Naive thymus-derived CD4-positive, alpha-beta T cell (primary cell): ENCODE measurements at regions of chr22 and their contacts with region 1.

Region 1: DNA sequence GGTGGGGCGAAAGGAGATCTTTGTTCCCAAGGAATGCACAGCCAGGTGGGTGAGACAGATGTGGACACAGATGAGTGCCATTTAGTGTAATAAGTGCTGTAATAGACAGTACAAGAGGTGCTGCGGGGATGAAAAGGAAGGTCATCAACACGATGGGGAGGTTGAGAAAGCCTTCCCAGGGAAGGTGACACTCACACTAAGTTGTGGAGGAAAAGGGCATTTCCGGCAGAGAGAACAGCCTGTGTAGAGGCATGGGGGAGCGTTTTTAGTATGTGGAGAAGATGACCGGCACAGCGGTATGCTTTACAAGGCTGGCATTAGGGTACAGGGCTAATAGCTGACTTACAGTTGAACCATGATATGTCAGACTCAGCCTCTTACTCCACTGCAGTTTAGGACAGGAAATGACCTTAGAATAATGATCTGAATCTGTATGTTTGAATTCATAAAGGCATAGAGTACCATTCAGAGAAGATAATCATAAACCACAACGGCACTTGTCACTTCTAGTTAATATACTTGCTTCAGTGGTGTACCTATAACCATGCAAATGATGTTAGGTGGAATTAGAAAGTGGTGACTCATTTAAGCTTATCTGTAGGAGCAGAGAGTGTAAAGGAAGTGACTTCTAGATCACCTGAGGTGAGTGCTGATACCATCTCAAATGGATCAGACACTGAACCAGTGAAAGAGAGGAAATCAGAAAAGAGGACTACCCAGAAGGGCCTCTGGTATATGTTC is 60.6 kb downstream of the FAM83F start:
- DNase-seq: peak in 7 of 9 donors; percentile 15 to 70 (median 39)
- ATAC-seq: peak; percentile 95
- H3K4me3 ChIP-seq: peak overlapping the region; percentile 21
- H3K4me3 Mint-ChIP-seq: peak overlapping the region; percentile 60 to 80 (median 70)
- H3K27ac ChIP-seq: peak overlapping the region; percentile 65
- H3K27ac Mint-ChIP-seq: peak overlapping the region; percentile 50 to 91 (median 84)
- H3K4me1 ChIP-seq: peaks cover 53 to 69% of the 10 kb centered on the region in 2 donors
- H3K4me1 Mint-ChIP-seq: peaks cover 63 to 95% (median 83%) of the 10 kb centered on the region in 7 donors
- H3K27me3 ChIP-seq: no peaks in the 10 kb centered on the region
- H3K27me3 Mint-ChIP-seq: no peaks in the 10 kb centered on the region

Region 2: GRCh38 chr22:40094485-40094884 is 39.2 kb after region 1 on chr22:
- CTCF ChIA-PET with region 1: no interaction called
- POLR2A ChIA-PET with region 1: interaction called, 6 read pairs
- intact Hi-C with region 1: loop called in 1 of 2 experiments (anchors 5 kb)
- DNase-seq: peak in 1 of 9 donors; percentile 27
- ATAC-seq: peak; percentile 44
- H3K4me3 ChIP-seq: no peak overlapping the region
- H3K4me3 Mint-ChIP-seq: peak overlapping the region; percentile 0 to 79 (median 66)
- H3K27ac ChIP-seq: no peak overlapping the region
- H3K27ac Mint-ChIP-seq: peak overlapping the region in 8 of 9 donors; percentile 6 to 87 (median 54)
- H3K4me1 ChIP-seq: peaks cover 9 to 61% of the 10 kb centered on the region in 2 donors
- H3K4me1 Mint-ChIP-seq: peaks cover 46 to 90% (median 76%) of the 10 kb centered on the region in 7 donors
- H3K27me3 ChIP-seq: no peaks in the 10 kb centered on the region
- H3K27me3 Mint-ChIP-seq: no peaks in the 10 kb centered on the region

Region 3: GRCh38 chr22:40116496-40117200 is 61.3 kb after region 1 on chr22:
- CTCF ChIA-PET with region 1: no interaction called
- POLR2A ChIA-PET with region 1: no interaction called
- intact Hi-C with region 1: loop called in 1 of 2 experiments (anchors 2 kb)
- DNase-seq: peak in 8 of 9 donors; percentile 26 to 88 (median 84)
- ATAC-seq: peak; percentile 95
- H3K4me3 ChIP-seq: peak overlapping the region; percentile 6
- H3K4me3 Mint-ChIP-seq: peak overlapping the region; percentile 26 to 89 (median 78)
- H3K27ac ChIP-seq: peak overlapping the region; percentile 48
- H3K27ac Mint-ChIP-seq: peak overlapping the region; percentile 79 to 94 (median 87)
- H3K4me1 ChIP-seq: peaks cover 24 to 64% of the 10 kb centered on the region in 2 donors
- H3K4me1 Mint-ChIP-seq: peaks cover 31 to 95% (median 92%) of the 10 kb centered on the region in 7 donors
- H3K27me3 ChIP-seq: no peaks in the 10 kb centered on the region
- H3K27me3 Mint-ChIP-seq: no peaks in the 10 kb centered on the region

Region 4: DNA sequence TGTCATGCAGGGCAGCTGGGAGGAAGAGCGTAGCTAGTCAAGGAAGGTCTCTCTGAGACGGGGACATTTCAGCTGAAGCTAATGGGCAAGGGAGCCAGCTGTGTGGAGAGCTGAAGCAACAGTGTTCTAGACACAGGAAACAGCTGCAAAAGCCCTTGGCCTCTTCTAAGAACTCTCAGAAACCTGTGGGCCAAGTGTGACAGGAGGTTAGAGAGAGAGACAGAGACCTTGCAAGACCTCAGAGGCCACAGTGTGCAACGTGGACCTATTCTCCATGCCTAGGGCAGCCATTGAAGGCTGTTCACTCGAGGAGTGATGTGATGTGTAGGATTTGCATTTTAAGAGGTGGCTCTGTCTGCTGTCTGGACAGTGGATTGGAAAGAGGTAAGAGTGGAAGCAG is 73.7 kb after region 1 on chr22:
- CTCF ChIA-PET with region 1: no interaction called
- POLR2A ChIA-PET with region 1: no interaction called
- intact Hi-C with region 1: loop called in 1 of 2 experiments (anchors 5 kb)
- DNase-seq: peak in 1 of 9 donors; percentile 24
- ATAC-seq: peak; percentile 83
- H3K4me3 ChIP-seq: no peak overlapping the region
- H3K4me3 Mint-ChIP-seq: peak overlapping the region in 7 of 10 donors; percentile 1 to 81 (median 34)
- H3K27ac ChIP-seq: no peak overlapping the region
- H3K27ac Mint-ChIP-seq: peak overlapping the region in 6 of 9 donors; percentile 32 to 85 (median 54)
- H3K4me1 ChIP-seq: no peaks in the 10 kb centered on the region
- H3K4me1 Mint-ChIP-seq: peaks cover 23 to 55% (median 44%) of the 10 kb centered on the region in 7 donors
- H3K27me3 ChIP-seq: no peaks in the 10 kb centered on the region
- H3K27me3 Mint-ChIP-seq: no peaks in the 10 kb centered on the region

Region 5: GRCh38 chr22:40203572-40203971 is 148.3 kb after region 1 on chr22:
- CTCF ChIA-PET with region 1: no interaction called
- POLR2A ChIA-PET with region 1: no interaction called
- intact Hi-C with region 1: loop called in 1 of 2 experiments (anchors 5 kb)
- DNase-seq: peak in 7 of 9 donors; percentile 46 to 72 (median 60)
- ATAC-seq: peak; percentile 93
- H3K4me3 ChIP-seq: peak overlapping the region; percentile 5
- H3K4me3 Mint-ChIP-seq: peak overlapping the region; percentile 60 to 73 (median 66)
- H3K27ac ChIP-seq: peak overlapping the region; percentile 54
- H3K27ac Mint-ChIP-seq: peak overlapping the region; percentile 74 to 95 (median 85)
- H3K4me1 ChIP-seq: peaks cover 24 to 49% of the 10 kb centered on the region in 2 donors
- H3K4me1 Mint-ChIP-seq: peaks cover 50 to 88% (median 79%) of the 10 kb centered on the region in 7 donors
- H3K27me3 ChIP-seq: no peaks in the 10 kb centered on the region
- H3K27me3 Mint-ChIP-seq: no peaks in the 10 kb centered on the region